K562 (cell line): ENCODE measurements at regions of chr21 and their contacts with region 1.

Region 1: DNA sequence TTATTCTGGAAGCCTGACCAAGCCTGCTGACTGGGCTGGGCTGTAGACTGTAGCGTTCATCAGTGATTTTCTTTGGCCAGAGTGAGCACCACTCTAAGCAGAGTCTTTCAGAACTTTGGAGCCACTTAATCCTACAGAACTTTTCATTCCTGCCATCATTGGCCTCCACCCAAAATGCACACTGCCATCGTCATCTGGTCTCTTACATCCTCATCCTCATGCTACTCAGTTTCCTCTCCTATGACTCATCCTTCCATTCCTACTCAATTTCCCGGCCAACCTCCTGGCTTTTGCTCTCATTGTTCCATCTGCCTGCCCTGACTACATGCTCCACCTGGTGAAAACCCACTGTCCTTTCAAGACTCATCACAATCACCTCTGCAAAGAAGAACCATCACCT is 233.8 kb upstream of the USP25 start:
- DNase-seq: no peak
- ATAC-seq: no peak
- H3K4me3 ChIP-seq: no peak overlapping the region
- H3K27ac ChIP-seq: no peak overlapping the region
- H3K4me1 ChIP-seq: no peaks in the 10 kb centered on the region
- H3K27me3 ChIP-seq: peaks cover 0 to 5% of the 10 kb centered on the region in 2 experiments; a peak in 1 of 5 replicates
- CTCF ChIP-seq: no peak
- EP300 ChIP-seq: no peak
- POLR2A ChIP-seq: no peak
- RAD21 ChIP-seq: no peak

Region 2: GRCh38 chr21:14763695-14764064 is 732.3 kb before region 1 on chr21:
- CTCF ChIA-PET with region 1: no interaction called
- POLR2A ChIA-PET with region 1: no interaction called
- in situ Hi-C with region 1: no loop called
- intact Hi-C with region 1: no loop called
- DNase-seq: no peak
- ATAC-seq: no peak
- H3K4me3 ChIP-seq: no peak overlapping the region
- H3K27ac ChIP-seq: peak overlapping the region; percentile 77
- H3K4me1 ChIP-seq: peaks cover 6 to 35% of the 10 kb centered on the region in 2 experiments; a peak in 4 of 5 replicates
- H3K27me3 ChIP-seq: no peaks in the 10 kb centered on the region
- CTCF ChIP-seq: no peak
- EP300 ChIP-seq: no peak
- POLR2A ChIP-seq: no peak
- RAD21 ChIP-seq: no peak

Region 3: DNA sequence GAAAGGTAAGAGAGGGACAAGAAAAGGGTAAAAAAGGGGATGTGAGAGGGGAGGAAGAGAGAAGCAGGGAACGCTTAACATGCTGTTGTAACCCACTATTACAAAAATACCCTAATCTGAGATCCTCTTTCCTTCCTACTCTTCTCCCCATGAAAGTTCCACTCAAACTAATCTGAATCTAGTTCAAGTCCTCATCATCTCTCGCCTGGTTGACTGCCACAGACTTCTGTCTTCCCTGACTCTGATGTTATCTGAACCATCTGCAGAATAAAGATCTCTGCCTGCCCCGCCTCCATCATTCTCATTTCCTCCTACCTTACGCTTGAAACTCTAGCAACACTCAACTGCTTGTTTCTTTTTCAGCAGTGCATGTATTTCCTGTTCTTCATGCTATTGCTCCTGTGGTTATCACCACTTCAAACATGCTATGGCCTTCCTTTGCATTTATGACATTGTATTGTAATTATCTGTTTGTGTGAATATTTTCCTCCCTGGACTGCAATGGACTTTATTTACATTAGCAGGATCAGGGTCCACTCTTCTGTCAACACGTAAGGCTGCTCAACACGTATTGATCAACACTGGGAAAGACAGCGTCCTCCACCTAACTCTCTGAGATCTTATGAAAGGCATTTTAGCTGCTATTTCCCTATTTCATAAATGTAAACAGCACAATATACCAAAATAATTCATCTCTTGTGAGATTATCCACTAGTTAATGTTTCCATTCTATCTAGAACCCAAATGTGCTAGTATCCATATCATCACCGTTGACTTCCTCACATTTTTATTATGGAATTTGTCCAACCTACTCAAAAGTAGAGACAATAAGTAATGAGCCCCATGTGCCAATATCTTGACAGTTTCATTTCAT is 18.3 kb after region 1 on chr21:
- CTCF ChIA-PET with region 1: no interaction called
- POLR2A ChIA-PET with region 1: no interaction called
- in situ Hi-C with region 1: no loop called
- intact Hi-C with region 1: no loop called
- DNase-seq: no peak
- ATAC-seq: no peak
- H3K4me3 ChIP-seq: no peak overlapping the region
- H3K27ac ChIP-seq: no peak overlapping the region
- H3K4me1 ChIP-seq: no peaks in the 10 kb centered on the region
- H3K27me3 ChIP-seq: no peaks in the 10 kb centered on the region
- CTCF ChIP-seq: no peak
- EP300 ChIP-seq: no peak
- POLR2A ChIP-seq: no peak
- RAD21 ChIP-seq: no peak

Region 4: GRCh38 chr21:15534450-15534886 is 38.5 kb after region 1 on chr21:
- CTCF ChIA-PET with region 1: no interaction called
- POLR2A ChIA-PET with region 1: no interaction called
- in situ Hi-C with region 1: no loop called
- intact Hi-C with region 1: no loop called
- DNase-seq: no peak
- ATAC-seq: no peak
- H3K4me3 ChIP-seq: no peak overlapping the region
- H3K27ac ChIP-seq: no peak overlapping the region
- H3K4me1 ChIP-seq: no peaks in the 10 kb centered on the region
- H3K27me3 ChIP-seq: no peaks in the 10 kb centered on the region
- CTCF ChIP-seq: peak in 1 of 3 experiments; percentile 2; a peak in 1 of 6 replicates
- EP300 ChIP-seq: no peak
- POLR2A ChIP-seq: no peak
- RAD21 ChIP-seq: no peak

Region 5: DNA sequence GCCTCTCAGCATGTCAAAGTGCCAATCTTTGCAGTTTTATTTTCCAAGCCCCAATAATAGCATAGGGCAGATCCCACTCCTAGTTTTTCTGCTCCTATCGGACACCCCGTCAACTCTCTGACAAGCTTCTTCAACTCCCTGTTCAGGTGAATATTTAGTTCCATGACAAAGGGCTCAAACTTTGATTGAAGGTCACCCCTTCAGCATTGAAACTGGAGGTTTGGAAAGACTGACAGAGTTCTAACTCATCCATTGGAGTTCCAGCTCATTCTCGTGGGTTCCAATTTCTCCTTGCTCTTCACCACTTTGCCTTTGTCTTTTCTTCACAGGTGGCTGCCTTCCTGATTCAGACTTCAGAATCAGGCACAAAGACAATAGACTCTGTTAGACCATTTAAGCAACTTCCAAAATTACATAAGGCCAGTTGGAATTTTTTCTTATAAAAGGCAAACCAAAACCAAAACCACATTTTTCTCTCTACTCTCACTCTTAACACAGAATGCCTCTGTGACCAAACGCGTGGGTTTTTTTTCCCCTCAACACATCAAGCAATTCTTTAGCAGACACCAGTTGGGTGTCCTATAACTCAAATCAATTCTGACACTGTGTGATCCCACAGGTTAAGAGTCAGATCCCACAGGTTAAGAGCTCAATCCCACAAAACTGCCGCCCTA is 64.6 kb after region 1 on chr21:
- CTCF ChIA-PET with region 1: no interaction called
- POLR2A ChIA-PET with region 1: no interaction called
- in situ Hi-C with region 1: no loop called
- intact Hi-C with region 1: no loop called
- DNase-seq: no peak
- ATAC-seq: no peak
- H3K4me3 ChIP-seq: no peak overlapping the region
- H3K27ac ChIP-seq: no peak overlapping the region
- H3K4me1 ChIP-seq: no peaks in the 10 kb centered on the region
- H3K27me3 ChIP-seq: no peaks in the 10 kb centered on the region; a peak in 1 of 5 replicates
- CTCF ChIP-seq: no peak
- EP300 ChIP-seq: no peak
- POLR2A ChIP-seq: no peak
- RAD21 ChIP-seq: no peak

Region 6: DNA sequence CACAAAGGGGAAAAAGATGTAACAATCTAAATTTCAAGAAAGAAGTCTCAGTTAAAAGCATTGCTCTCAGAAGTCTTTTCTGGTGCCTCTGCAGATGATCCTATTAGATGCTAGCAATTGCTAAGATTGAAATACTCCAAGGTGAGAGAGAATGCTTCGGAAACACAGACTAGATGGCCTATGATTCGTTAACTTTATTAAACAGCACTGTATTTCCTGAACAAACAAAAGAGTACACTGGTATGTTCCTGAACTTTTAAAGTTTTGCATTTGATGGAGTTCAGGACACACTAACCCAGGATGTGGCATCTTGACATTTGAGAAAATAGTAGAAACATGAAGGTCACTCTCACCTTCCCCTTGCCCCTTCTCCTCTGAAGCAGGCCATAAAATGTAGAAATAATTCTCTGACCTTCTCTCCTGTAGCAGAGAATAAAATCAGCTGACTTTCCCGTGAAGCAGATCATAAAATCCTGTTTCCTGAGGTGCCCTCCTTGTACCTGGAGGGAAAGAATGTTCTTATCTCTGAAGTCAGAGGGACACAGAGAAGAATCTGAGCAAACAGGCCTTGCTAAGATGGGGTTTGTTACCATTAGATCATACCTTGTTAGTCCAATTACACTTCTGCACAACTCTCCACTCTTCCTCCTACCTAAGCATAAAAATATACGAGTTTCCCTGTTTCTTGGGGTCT is 90.9 kb after region 1 on chr21:
- CTCF ChIA-PET with region 1: no interaction called
- POLR2A ChIA-PET with region 1: no interaction called
- in situ Hi-C with region 1: no loop called
- intact Hi-C with region 1: loop called (anchors 10 kb)
- DNase-seq: no peak
- ATAC-seq: no peak
- H3K4me3 ChIP-seq: no peak overlapping the region
- H3K27ac ChIP-seq: no peak overlapping the region
- H3K4me1 ChIP-seq: no peaks in the 10 kb centered on the region
- H3K27me3 ChIP-seq: no peaks in the 10 kb centered on the region
- CTCF ChIP-seq: no peak
- EP300 ChIP-seq: no peak
- POLR2A ChIP-seq: no peak
- RAD21 ChIP-seq: no peak

Region 7: DNA sequence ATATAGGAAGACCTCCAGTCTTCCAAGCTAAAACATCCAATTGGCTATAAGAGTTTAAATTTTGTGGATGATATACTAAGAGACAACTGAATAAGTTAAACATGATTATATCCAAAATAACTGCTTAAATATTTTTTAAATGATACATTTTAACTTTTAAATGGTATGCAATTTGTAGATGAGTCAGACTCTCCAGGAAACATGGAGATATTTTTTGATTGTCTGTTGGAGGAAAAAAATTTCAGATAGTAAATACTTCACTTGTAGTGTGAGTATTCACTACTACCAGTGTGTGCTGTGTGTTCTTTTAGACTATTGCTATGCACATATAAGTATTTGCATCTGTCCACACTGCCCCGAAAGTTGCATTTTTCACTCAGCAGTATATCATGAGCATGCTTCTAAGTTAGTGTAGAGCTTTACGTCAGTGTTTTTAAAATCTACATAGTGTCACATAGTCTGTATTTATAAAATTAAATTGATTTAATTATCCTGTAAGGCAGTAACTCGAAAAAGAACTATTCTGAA is 325.0 kb after region 1 on chr21:
- CTCF ChIA-PET with region 1: no interaction called
- POLR2A ChIA-PET with region 1: no interaction called
- in situ Hi-C with region 1: no loop called
- intact Hi-C with region 1: loop called (anchors 5 kb)
- DNase-seq: no peak
- ATAC-seq: no peak
- H3K4me3 ChIP-seq: no peak overlapping the region
- H3K27ac ChIP-seq: no peak overlapping the region
- H3K4me1 ChIP-seq: no peaks in the 10 kb centered on the region
- H3K27me3 ChIP-seq: no peaks in the 10 kb centered on the region
- CTCF ChIP-seq: no peak
- EP300 ChIP-seq: no peak
- POLR2A ChIP-seq: no peak
- RAD21 ChIP-seq: no peak